Calu3 (cell line): ENCODE measurements at regions of chr16 and their contacts with region 1.

Region 1: DNA sequence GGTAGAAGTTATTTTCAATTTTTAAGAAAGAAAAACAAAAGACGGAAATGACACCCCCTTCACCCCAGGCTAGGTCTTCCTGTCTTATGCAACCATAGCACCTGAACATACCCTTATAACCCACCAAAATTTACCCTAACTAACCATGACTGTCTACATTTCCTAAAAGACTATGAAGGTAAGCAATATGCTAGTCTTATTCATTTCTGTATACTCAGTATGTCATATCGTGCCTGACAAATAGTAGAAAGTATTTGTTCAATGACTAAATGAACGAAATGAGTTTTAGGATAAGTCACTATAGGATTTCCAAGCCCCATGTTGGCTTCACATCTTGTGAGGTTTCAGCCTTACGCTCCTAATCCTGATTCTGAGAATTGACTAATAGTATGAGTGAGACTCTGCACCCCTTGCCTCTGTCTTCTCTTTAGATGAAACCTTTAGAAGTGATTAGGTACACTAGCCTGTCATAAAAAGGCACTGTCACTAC is 6.5 kb downstream of the ADAT1 start:
- DNase-seq: no peak
- H3K4me3 Mint-ChIP-seq: no peak overlapping the region
- H3K27ac Mint-ChIP-seq: no peak overlapping the region
- H3K4me1 Mint-ChIP-seq: no peaks in the 10 kb centered on the region
- H3K27me3 Mint-ChIP-seq: no peaks in the 10 kb centered on the region
- CTCF ChIP-seq: no peak

Region 2: DNA sequence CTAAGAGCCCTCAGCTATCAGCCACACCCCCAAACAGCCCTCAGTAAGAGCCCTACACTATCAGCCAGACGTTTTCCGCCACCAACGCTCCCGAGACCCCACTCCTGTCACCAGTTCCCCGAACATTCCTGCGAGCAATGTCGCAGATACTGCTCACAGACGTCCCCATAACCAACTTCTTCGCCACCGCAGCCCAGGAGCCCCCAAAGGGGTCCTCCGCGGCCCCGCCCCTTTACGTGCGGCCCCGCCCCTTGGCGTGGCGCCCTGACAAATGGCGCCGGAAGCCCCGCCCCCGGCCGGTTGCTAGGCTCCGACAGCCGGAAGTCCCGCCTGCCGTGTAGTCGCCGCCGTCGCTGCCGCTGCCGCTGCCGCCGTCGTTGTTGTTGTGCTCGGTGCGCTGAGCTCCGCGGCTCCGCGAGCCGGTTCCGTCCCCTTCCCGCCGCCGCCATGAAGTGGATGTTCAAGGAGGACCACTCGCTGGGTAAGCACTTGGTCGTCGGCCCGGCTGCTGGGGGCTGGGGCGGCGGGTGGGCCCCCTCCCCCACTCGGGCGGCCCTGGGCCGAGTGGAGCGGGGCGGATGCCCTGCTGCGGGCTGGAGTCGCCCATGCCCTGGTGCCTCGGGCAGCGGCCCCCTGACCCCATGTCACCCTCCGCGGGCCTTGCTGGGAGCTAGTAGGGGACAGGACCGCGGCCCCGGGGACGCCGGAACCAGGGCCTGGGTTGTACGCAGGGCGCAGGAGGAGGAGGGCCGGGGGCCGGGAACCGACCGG is 50.3 kb before region 1 on chr16 and contains the start of gene GABARAPL2:
- CTCF ChIA-PET with region 1: no interaction called
- intact Hi-C with region 1: loop called (anchors 5 kb)
- DNase-seq: peak; percentile 93
- H3K4me3 Mint-ChIP-seq: peak within 1 kb of the TSS; percentile 83
- H3K27ac Mint-ChIP-seq: peak within 1 kb of the TSS; percentile 75
- H3K4me1 Mint-ChIP-seq: peaks cover 32% of the 10 kb centered on the region
- H3K27me3 Mint-ChIP-seq: peaks cover 27% of the 10 kb centered on the region
- CTCF ChIP-seq: no peak
- total RNA-seq, gene GABARAPL2: 112 and 123 TPM in 2 replicates